ENCODE measurements at regions of chr12 and their contacts with region 1.

Region 1: GRCh38 chr12:68610370-68611093 is at the start of gene RAP1B:
- DNase-seq: peak; percentile 83 to 94 (median 89)
- ATAC-seq: peak; percentile 79 to 82
- H3K4me3 Mint-ChIP-seq: peak within 1 kb of the TSS; percentile 95 to 99 (median 98)
- H3K27ac Mint-ChIP-seq: peak within 1 kb of the TSS; percentile 97 to 99 (median 98)
- H3K4me1 Mint-ChIP-seq: peaks cover 22 to 52% (median 46%) of the 10 kb centered on the region in 4 donors
- H3K27me3 Mint-ChIP-seq: no peaks in the 10 kb centered on the region
- polyA plus RNA-seq, gene RAP1B: 562 to 708 (median 574) TPM

Region 2: DNA sequence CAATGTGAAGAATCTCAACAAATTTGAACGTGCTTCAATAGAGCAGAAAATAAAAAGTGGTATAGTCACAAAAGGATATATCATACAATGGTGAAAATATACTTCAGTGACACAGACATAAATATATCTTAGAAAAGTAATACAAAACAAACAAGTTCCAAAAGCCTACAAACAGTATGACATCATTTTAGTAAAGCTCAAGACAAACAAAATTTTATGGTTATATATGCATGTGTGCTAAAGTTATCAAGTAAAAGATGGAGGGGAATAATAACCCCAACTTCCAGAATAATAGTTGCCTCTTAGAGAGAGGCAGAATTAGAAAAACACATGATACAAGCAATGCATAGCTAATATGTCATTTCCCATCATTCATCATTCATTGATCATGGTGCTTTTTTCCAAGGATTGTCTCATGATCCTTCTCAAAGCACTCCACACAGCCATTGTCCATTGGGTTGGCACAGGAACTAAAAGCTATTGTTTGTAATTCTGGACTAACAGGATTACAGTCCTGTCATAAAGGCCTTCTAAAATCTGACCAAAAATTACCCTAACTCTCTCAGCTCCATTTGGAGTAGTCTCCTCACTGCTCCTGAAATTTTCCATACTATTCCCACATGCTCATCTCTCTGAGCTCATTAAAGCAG is 561.8 kb before region 1 on chr12:
- POLR2A ChIA-PET with region 1: no interaction called
- DNase-seq: no peak
- ATAC-seq: no peak
- H3K4me3 Mint-ChIP-seq: no peak overlapping the region
- H3K27ac Mint-ChIP-seq: no peak overlapping the region
- H3K4me1 Mint-ChIP-seq: peaks cover 0 to 2% (median 0%) of the 10 kb centered on the region in 4 donors
- H3K27me3 Mint-ChIP-seq: peaks cover 0 to 4% (median 0%) of the 10 kb centered on the region in 5 donors

Region 3: DNA sequence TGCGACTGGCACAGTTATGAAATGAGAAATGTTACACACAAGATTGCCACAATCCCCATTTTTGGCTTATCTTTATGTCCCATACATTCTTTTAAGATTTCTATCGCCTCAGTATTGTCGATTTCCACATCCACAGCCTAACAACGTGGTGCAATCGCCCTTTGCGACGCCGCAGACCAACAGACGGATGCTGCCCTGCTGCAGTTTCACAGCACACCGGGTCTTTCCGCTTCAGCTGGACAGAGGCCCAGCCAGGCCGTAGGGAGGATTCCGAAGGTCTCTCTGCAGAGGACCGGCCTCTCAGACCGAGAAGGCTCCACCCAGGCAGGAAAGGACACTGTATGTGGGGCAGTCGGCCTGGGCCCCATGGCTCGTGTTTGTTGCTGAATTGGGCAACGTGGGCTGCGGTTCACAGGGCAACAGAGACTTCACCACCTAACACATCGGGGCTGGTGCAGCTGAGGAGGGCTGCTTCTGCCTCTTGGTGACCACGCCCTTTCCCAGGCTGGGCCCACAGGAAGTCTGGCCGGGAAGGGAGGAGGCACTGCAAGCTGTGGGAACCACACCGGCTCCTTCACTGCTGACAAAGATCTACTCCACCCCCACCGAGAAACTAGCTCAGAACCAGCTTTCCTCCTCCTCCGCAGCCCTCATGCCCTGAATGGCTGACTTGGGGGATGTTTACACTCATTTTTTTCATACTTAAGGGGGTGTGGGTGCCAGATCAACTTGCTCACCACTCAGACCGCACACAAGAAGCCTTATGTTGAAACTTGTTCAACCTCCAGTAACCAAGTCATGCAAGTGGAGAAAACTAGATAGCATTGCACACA is 245.4 kb before region 1 on chr12:
- POLR2A ChIA-PET with region 1: interaction called, 34 read pairs
- DNase-seq: peak; percentile 57 to 92 (median 80)
- ATAC-seq: peak; percentile 91
- H3K4me3 Mint-ChIP-seq: peak overlapping the region; percentile 71 to 88 (median 84)
- H3K27ac Mint-ChIP-seq: peak overlapping the region; percentile 91 to 99 (median 97)
- H3K4me1 Mint-ChIP-seq: peaks cover 32 to 79% (median 68%) of the 10 kb centered on the region in 4 donors
- H3K27me3 Mint-ChIP-seq: no peaks in the 10 kb centered on the region

Region 4: DNA sequence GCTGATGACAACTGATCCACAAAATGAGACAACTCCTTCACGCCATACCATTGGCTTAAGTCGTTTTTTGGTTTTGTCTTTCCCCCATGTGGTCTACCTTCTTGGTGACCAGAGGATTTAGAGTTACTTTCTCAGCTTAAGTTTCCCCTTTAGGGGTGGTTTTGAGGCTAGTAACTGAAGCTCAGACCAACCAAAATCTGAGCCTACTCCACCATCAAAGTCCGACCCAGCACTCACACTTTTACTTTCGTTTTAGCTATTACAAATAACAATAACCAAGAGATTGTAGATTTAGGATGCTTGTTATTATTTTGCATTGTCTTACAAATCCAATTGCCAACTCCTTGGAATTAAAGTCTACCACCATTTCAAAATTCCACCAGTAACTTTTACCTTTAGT is 147.7 kb before region 1 on chr12:
- POLR2A ChIA-PET with region 1: no interaction called
- DNase-seq: peak in 1 of 10 donors; percentile 19
- ATAC-seq: peak; percentile 42 to 54
- H3K4me3 Mint-ChIP-seq: peak overlapping the region; percentile 68 to 88 (median 83)
- H3K27ac Mint-ChIP-seq: peak overlapping the region; percentile 87 to 95 (median 91)
- H3K4me1 Mint-ChIP-seq: peaks cover 6 to 32% (median 19%) of the 10 kb centered on the region in 4 donors
- H3K27me3 Mint-ChIP-seq: no peaks in the 10 kb centered on the region

Region 5: GRCh38 chr12:68521321-68521839 is 89.2 kb before region 1 on chr12:
- POLR2A ChIA-PET with region 1: no interaction called
- DNase-seq: no peak
- ATAC-seq: no peak
- H3K4me3 Mint-ChIP-seq: no peak overlapping the region
- H3K27ac Mint-ChIP-seq: no peak overlapping the region
- H3K4me1 Mint-ChIP-seq: peaks cover 0 to 16% (median 5%) of the 10 kb centered on the region in 4 donors
- H3K27me3 Mint-ChIP-seq: no peaks in the 10 kb centered on the region

Region 6: GRCh38 chr12:68580911-68581310 is 29.6 kb before region 1 on chr12:
- POLR2A ChIA-PET with region 1: interaction called, 54 read pairs
- DNase-seq: no peak
- ATAC-seq: no peak
- H3K4me3 Mint-ChIP-seq: no peak overlapping the region
- H3K27ac Mint-ChIP-seq: peak overlapping the region in 2 of 10 donors; percentile 13 to 73
- H3K4me1 Mint-ChIP-seq: peaks cover 18 to 71% (median 56%) of the 10 kb centered on the region in 4 donors
- H3K27me3 Mint-ChIP-seq: no peaks in the 10 kb centered on the region

Region 7: GRCh38 chr12:68595241-68595640 is 15.3 kb before region 1 on chr12:
- POLR2A ChIA-PET with region 1: interaction called, 129 read pairs
- DNase-seq: no peak
- ATAC-seq: no peak
- H3K4me3 Mint-ChIP-seq: peak overlapping the region in 5 of 10 donors; percentile 16 to 61 (median 28)
- H3K27ac Mint-ChIP-seq: peak overlapping the region in 8 of 10 donors; percentile 7 to 84 (median 46)
- H3K4me1 Mint-ChIP-seq: peaks cover 39 to 81% (median 73%) of the 10 kb centered on the region in 4 donors
- H3K27me3 Mint-ChIP-seq: no peaks in the 10 kb centered on the region

Region 8: GRCh38 chr12:68675101-68675842 is 64.7 kb after region 1 on chr12:
- POLR2A ChIA-PET with region 1: interaction called, 12 read pairs
- DNase-seq: peak; percentile 58 to 91 (median 76)
- ATAC-seq: peak; percentile 96 to 99
- H3K4me3 Mint-ChIP-seq: peak overlapping the region; percentile 43 to 85 (median 75)
- H3K27ac Mint-ChIP-seq: peak overlapping the region; percentile 0 to 98 (median 94)
- H3K4me1 Mint-ChIP-seq: peaks cover 25 to 62% (median 60%) of the 10 kb centered on the region in 4 donors
- H3K27me3 Mint-ChIP-seq: no peaks in the 10 kb centered on the region

Region 9: DNA sequence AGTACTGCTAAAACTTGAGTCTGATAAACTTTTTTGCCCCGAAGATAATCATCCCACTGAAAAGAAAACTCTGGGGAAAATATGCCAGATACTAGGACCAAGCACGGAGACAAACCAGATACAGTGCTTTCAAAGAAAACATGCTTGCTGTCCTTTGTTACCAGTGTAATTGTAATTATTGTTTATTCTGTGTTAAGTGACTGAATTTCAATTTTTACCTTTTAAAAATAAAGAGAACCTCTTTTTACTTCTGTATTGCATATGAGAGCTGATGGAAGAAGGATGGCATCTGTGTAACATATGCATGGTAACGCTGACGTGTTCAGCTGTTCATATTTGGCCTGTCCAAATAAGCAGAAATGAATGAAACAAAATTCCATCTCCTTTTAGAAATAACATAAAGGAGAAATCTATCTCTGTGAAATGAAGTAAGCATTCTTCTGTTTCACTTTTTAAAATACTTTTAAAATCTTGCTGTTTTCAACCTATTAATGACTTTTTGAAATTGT is 158.0 kb after region 1 on chr12:
- POLR2A ChIA-PET with region 1: no interaction called
- DNase-seq: no peak
- ATAC-seq: no peak
- H3K4me3 Mint-ChIP-seq: no peak overlapping the region
- H3K27ac Mint-ChIP-seq: peak overlapping the region in 1 of 10 donors; percentile 85
- H3K4me1 Mint-ChIP-seq: peaks cover 6 to 20% (median 14%) of the 10 kb centered on the region in 4 donors
- H3K27me3 Mint-ChIP-seq: no peaks in the 10 kb centered on the region

Measured in naive thymus-derived CD8-positive, alpha-beta T cell (primary cell).